ENCODE measurements at regions of chr1 and their contacts with region 1.

Region 1: GRCh38 chr1:229227298-229227919 is 43.5 kb upstream of the RAB4A start:
- DNase-seq: peak; percentile 81
- ATAC-seq: peak; percentile 77
- H3K4me3 Mint-ChIP-seq: no peak overlapping the region
- H3K27ac Mint-ChIP-seq: no peak overlapping the region
- H3K4me1 Mint-ChIP-seq: peaks cover 4% of the 10 kb centered on the region
- H3K27me3 Mint-ChIP-seq: peaks cover 26% of the 10 kb centered on the region

Region 2: DNA sequence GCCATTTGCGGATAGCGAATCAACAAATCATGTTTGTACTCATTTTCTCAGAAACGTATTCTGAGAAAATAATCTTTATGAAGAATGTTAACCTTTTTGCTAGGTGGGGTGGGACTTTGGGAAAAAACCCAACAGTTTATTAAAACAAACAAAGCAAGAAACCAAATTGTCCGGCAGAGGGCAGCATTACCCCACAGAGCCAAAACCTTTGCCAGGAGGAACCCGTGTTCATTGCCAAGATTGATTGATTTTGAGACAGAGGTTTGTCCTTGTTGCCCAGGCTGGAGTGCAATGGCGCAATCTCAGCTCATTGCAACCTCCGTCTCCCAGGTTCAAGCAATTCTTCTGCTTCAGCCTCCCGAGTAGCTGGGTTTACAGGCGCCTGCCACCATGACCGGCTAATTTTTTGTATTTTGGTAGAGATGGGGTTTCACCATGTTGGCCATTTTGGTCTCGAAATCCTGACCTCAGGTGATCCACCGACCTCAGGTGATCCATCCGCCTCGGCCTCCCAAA is 563.0 kb before region 1 on chr1:
- CTCF ChIA-PET with region 1: interaction called, 31 read pairs
- DNase-seq: peak; percentile 84
- ATAC-seq: peak; percentile 45
- H3K4me3 Mint-ChIP-seq: no peak overlapping the region
- H3K27ac Mint-ChIP-seq: no peak overlapping the region
- H3K4me1 Mint-ChIP-seq: peaks cover 5% of the 10 kb centered on the region
- H3K27me3 Mint-ChIP-seq: peaks cover 24% of the 10 kb centered on the region

Region 3: GRCh38 chr1:228691926-228692325 is 535.5 kb before region 1 on chr1:
- CTCF ChIA-PET with region 1: interaction called, 29 read pairs
- DNase-seq: peak; percentile 45
- ATAC-seq: no peak
- H3K4me3 Mint-ChIP-seq: no peak overlapping the region
- H3K27ac Mint-ChIP-seq: no peak overlapping the region
- H3K4me1 Mint-ChIP-seq: peaks cover 14% of the 10 kb centered on the region
- H3K27me3 Mint-ChIP-seq: peaks cover 46% of the 10 kb centered on the region

Region 4: GRCh38 chr1:228734881-228735801 is 492.3 kb before region 1 on chr1 and contains the start of gene RHOU:
- CTCF ChIA-PET with region 1: interaction called, 41 read pairs
- DNase-seq: peak; percentile 72
- ATAC-seq: peak; percentile 94
- H3K4me3 Mint-ChIP-seq: peak within 1 kb of the TSS; percentile 77
- H3K27ac Mint-ChIP-seq: no peak within 1 kb of the TSS
- H3K4me1 Mint-ChIP-seq: peaks cover 10% of the 10 kb centered on the region
- H3K27me3 Mint-ChIP-seq: peaks cover 57% of the 10 kb centered on the region
- total RNA-seq, gene RHOU: 0.61 to 4.5 TPM

Region 5: DNA sequence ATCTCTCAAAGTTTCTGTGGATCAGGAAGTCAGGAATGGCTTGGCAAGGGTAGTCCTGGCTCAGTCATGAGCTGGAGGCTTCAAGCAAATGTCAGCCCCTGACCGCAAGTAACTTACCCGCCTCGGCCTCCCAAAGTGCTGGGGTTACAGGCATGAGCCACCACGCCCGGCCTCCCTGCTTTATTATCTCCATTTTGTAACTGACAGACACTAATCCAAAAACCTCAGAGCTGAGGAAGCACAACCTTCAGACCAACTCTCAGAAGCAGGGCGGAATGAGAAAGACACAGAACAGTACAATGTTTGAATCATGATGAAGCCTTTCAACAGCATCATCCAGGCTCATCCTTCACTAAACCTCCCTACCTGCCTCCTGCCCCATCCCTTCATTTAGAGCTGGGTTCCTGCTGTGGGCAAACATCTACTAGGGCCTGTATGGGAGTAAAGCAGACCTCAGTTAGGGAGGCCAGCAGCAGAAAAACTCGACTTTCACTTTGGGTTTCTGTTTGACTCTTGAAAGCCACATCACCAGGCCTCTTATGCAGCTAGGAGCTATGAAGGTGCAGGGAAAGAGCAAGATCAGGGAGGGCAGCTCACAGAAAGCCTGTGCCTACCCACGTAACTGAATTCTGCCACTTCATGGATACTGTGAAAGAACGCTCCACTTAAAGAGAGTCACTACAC is 40.9 kb before region 1 on chr1:
- CTCF ChIA-PET with region 1: interaction called, 16 read pairs
- DNase-seq: peak; percentile 75
- ATAC-seq: peak; percentile 96
- H3K4me3 Mint-ChIP-seq: no peak overlapping the region
- H3K27ac Mint-ChIP-seq: peak overlapping the region; percentile 63
- H3K4me1 Mint-ChIP-seq: peaks cover 23% of the 10 kb centered on the region
- H3K27me3 Mint-ChIP-seq: peaks cover 48% of the 10 kb centered on the region

Region 6: GRCh38 chr1:229210844-229211560 is 16.4 kb before region 1 on chr1:
- CTCF ChIA-PET with region 1: interaction called, 10 read pairs
- DNase-seq: no peak
- ATAC-seq: no peak
- H3K4me3 Mint-ChIP-seq: no peak overlapping the region
- H3K27ac Mint-ChIP-seq: no peak overlapping the region
- H3K4me1 Mint-ChIP-seq: peaks cover 6% of the 10 kb centered on the region
- H3K27me3 Mint-ChIP-seq: peaks cover 19% of the 10 kb centered on the region

Region 7: GRCh38 chr1:229258031-229258756 is 30.8 kb after region 1 on chr1:
- CTCF ChIA-PET with region 1: interaction called, 31 read pairs
- DNase-seq: peak; percentile 65
- ATAC-seq: peak; percentile 63
- H3K4me3 Mint-ChIP-seq: no peak overlapping the region
- H3K27ac Mint-ChIP-seq: peak overlapping the region; percentile 53
- H3K4me1 Mint-ChIP-seq: peaks cover 28% of the 10 kb centered on the region
- H3K27me3 Mint-ChIP-seq: peaks cover 3% of the 10 kb centered on the region